Activated CD4-positive, alpha-beta T cell treated with anti-CD3 and anti-CD28 coated beads for 36 hours (primary cell): ENCODE measurements at regions of chr15 and their contacts with region 1.

Region 1: DNA sequence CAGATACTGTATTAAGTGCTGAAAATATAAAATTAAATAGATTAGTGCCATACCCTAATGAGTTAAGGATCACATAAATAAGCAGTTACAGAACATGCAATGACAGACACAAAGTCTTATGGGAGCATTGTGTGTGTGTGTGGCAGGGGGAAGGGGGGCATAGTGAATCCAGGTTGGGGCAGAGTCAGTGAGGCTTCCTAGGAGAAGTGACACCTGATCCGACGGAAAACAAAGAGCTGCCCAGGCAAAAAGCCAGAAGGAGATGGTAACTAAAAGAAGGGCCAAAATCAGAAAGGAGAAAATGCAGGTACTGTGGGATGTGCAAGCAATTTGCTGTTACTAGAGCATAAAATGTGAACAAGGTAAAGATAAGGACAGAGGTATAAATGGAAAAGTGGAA is 80.1 kb upstream of the CHRM5 start:
- DNase-seq: no peak
- ATAC-seq: no peak
- H3K4me3 Mint-ChIP-seq: no peak overlapping the region
- H3K27ac Mint-ChIP-seq: no peak overlapping the region
- H3K4me1 Mint-ChIP-seq: peaks cover 2% of the 10 kb centered on the region
- H3K27me3 Mint-ChIP-seq: no peaks in the 10 kb centered on the region

Region 2: DNA sequence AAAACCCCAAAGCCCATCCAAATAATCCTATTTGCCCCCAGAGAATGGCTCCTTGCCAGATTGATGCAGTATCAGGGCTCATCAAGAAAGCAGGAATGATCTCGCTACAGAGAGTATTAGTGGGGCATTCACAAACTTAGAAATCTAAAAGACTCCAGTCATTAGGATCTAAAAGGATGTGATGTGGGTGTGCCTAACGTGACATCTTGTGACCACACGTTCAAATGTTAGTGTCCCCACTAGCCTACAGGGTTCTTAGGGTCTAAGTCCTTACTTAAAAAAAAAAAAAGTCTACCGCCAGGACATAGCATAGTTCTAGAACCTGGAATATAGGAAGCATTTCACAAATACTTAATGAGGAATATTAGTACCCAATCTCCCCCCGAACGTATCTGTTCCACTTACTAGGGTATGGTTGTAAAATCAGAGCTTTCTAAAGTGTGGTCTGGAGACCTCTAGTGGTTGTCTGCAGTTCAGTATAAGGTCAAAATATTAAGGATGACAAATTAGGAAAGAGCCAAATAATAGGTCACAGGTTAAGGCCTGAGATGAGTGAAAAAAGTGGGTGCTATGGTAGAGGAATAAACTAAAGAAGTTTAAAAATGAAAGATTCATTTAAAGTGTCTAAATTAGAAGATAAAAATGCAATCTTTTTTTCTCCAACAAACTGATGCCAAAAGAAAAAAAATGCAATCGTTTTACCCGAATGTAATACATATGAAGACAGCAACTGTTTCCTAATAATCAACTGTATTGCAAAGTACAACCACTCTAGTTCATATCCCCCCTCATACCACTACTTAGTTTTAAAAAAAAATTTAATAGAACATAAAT is 75.9 kb after region 1 on chr15:
- CTCF ChIA-PET with region 1: interaction called, 4 read pairs
- POLR2A ChIA-PET with region 1: no interaction called
- intact Hi-C with region 1: loop called in 1 of 2 experiments (anchors 10 kb)
- DNase-seq: no peak
- ATAC-seq: no peak
- H3K4me3 Mint-ChIP-seq: no peak overlapping the region
- H3K27ac Mint-ChIP-seq: no peak overlapping the region
- H3K4me1 Mint-ChIP-seq: no peaks in the 10 kb centered on the region
- H3K27me3 Mint-ChIP-seq: no peaks in the 10 kb centered on the region